Ascending aorta (tissue), 2 donors: ENCODE measurements at regions of chr16 and their contacts with region 1.

Region 1: DNA sequence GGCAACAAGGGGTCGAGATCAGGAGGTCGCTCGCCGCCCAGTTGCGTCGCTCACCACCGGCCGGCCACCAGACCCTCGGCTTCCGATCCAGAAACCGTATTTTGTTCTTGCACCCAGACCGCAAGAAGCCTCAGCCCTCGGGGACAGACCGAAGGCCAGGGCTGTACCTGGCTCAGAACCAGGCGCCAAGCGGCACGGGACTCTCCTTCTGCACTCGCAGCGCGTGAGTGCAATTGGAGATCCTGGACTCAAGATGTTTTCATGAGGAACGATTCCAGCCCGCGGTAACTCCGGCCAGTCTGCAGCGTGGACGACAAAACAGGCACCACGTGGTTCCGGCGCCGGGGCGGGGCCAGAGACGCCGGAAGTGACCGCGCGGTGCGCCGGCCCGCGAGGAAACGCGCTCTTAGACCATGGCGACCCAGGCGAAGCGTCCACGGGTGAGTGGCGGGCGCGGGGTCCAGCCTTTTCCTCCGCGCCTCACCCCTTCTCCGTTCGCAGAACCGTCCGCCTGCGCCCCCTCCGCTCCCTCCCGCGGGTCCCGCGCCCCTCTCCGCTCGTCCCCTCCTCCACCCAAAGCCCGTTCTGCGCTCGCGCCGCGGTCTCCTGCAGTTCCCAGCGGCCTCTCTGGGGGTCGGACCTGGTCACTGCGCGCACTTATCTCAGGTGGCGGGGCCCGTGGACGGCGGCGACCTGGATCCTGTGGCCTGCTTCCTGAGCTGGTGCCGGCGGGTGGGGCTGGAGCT is at the start of gene SETD6:
- DNase-seq: peak; percentile 64 to 92
- H3K4me3 ChIP-seq: peak within 1 kb of the TSS; percentile 89 to 92
- H3K27ac ChIP-seq: peak within 1 kb of the TSS; percentile 73 to 79
- H3K4me1 ChIP-seq: peaks cover 6 to 13% of the 10 kb centered on the region in 2 donors
- H3K27me3 ChIP-seq: no peaks in the 10 kb centered on the region
- CTCF ChIP-seq: peak; percentile 20 to 31 (median 25)
- total RNA-seq, gene SETD6: 24.4 TPM

Region 2: GRCh38 chr16:58360041-58360634 is 155.2 kb before region 1 on chr16:
- intact Hi-C with region 1: no loop called
- DNase-seq: no peak
- H3K4me3 ChIP-seq: no peak overlapping the region
- H3K27ac ChIP-seq: no peak overlapping the region
- H3K4me1 ChIP-seq: no peaks in the 10 kb centered on the region
- H3K27me3 ChIP-seq: no peaks in the 10 kb centered on the region
- CTCF ChIP-seq: no peak

Region 3: DNA sequence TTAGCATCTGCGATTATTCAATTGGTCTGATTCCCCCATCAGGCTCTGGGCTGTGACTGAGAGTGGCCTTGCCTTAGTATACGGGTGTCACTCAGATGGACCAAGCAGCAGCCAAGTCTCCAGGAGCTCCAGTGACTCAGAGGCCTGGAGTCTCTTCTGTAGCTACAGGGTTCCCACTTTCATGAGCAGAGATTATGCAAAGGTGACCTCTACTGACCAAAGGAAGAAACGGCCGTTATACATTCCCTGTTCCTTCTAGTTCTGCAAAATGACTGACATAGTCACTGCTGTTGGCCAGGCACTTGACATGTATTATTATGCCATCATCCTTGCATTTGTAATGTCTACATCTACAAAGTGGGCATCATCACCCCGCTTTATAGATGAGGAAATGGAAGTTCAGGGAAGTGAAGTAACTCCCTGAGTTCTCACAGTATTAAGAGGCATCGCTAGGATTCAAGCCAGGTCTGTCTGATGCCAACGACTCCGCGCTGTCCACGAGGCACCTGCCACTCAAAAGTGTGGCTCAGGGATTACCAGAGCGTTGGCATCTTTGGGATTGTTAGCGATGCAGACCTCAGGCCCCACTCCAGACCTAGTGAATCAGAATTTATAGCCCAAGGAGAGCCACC is 146.0 kb after region 1 on chr16:
- intact Hi-C with region 1: loop called (anchors 5 kb)
- DNase-seq: peak in 1 of 2 donors; percentile 74
- H3K4me3 ChIP-seq: no peak overlapping the region
- H3K27ac ChIP-seq: no peak overlapping the region
- H3K4me1 ChIP-seq: no peaks in the 10 kb centered on the region
- H3K27me3 ChIP-seq: no peaks in the 10 kb centered on the region
- CTCF ChIP-seq: peak; percentile 27 to 57 (median 42)

Region 4: DNA sequence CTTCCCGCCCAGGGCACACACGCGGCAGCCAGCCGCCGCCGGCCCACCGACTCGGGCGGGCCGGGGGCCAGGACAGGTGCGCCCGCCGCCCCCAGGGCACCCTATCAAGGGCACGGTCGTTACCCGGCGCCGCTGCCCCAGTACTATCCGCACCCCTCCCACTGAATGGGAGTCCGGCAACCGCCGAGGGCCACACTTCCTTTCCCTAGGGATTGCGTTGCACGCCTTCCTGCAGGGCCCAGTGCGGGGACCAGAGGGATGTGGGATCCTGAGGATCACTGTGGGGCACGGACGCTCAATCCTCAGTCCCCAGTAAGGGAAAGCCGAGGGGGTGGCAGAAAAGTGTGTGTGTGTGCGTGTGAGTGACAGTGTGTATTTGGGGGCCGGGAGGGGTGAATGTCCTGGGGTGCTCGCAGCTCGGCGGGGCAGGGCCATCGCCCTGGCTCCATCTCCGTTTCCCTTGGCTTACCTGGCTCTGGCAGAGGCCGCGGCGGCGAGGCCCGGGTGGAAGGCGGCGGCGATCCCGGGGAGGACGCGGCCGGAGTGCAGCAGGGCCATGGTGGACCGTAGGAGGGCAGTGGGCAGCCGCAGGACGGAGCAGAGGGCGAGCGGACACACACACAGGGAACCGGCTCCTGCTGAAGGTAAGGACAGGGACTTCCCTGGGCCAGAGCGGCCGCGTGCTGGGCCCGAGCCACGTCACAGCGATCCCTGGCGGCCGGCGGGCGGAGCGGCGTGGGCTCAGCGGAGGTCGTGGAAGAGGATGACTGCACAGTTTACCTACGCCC is 218.6 kb after region 1 on chr16 and contains the start of gene GOT2:
- intact Hi-C with region 1: loop called (anchors 1 kb)
- DNase-seq: peak; percentile 28 to 88
- H3K4me3 ChIP-seq: peak within 1 kb of the TSS; percentile 85 to 93
- H3K27ac ChIP-seq: peak within 1 kb of the TSS; percentile 75 to 81
- H3K4me1 ChIP-seq: peaks cover 12 to 14% of the 10 kb centered on the region in 2 donors
- H3K27me3 ChIP-seq: no peaks in the 10 kb centered on the region
- CTCF ChIP-seq: peak; percentile 70 to 94 (median 88)
- total RNA-seq, gene GOT2: 48.7 TPM